ENCODE measurements at regions of chr5 and their contacts with region 1.

Region 1: GRCh38 chr5:134004592-134005375 is at the start of gene VDAC1:
- DNase-seq: peak; percentile 85
- H3K4me3 Mint-ChIP-seq: peak within 1 kb of the TSS; percentile 90
- H3K27ac Mint-ChIP-seq: peak within 1 kb of the TSS; percentile 97
- H3K4me1 Mint-ChIP-seq: peaks cover 37% of the 10 kb centered on the region
- H3K27me3 Mint-ChIP-seq: no peaks in the 10 kb centered on the region
- total RNA-seq, gene VDAC1: 407 to 416 TPM

Region 2: DNA sequence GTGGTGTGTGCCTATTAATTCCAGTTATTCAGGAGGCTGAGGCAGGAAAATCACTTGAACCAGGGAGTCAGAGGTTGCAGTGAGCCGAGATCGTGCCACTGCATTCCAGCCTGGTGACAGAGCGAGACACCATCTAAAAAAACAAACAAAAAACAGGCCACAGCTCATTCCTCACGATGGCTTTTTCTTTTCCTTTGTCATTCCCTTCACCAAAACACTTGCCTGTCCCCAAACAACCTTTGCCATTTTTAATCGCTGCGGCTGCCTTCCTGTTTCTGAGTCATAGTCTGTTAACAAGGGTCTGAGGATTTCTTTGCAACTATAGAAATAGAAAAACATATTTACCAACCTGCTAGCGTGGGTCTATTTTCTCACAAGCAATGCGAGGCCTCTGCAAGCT is 269.5 kb before region 1 on chr5:
- CTCF ChIA-PET with region 1: no interaction called
- POLR2A ChIA-PET with region 1: no interaction called
- intact Hi-C with region 1: no loop called
- DNase-seq: no peak
- H3K4me3 Mint-ChIP-seq: no peak overlapping the region
- H3K27ac Mint-ChIP-seq: no peak overlapping the region
- H3K4me1 Mint-ChIP-seq: no peaks in the 10 kb centered on the region
- H3K27me3 Mint-ChIP-seq: peaks cover 2% of the 10 kb centered on the region

Region 3: GRCh38 chr5:133825631-133826289 is 179.0 kb before region 1 on chr5:
- CTCF ChIA-PET with region 1: no interaction called
- POLR2A ChIA-PET with region 1: no interaction called
- intact Hi-C with region 1: no loop called
- DNase-seq: peak; percentile 25
- H3K4me3 Mint-ChIP-seq: no peak overlapping the region
- H3K27ac Mint-ChIP-seq: no peak overlapping the region
- H3K4me1 Mint-ChIP-seq: peaks cover 20% of the 10 kb centered on the region
- H3K27me3 Mint-ChIP-seq: peaks cover 5% of the 10 kb centered on the region

Region 4: DNA sequence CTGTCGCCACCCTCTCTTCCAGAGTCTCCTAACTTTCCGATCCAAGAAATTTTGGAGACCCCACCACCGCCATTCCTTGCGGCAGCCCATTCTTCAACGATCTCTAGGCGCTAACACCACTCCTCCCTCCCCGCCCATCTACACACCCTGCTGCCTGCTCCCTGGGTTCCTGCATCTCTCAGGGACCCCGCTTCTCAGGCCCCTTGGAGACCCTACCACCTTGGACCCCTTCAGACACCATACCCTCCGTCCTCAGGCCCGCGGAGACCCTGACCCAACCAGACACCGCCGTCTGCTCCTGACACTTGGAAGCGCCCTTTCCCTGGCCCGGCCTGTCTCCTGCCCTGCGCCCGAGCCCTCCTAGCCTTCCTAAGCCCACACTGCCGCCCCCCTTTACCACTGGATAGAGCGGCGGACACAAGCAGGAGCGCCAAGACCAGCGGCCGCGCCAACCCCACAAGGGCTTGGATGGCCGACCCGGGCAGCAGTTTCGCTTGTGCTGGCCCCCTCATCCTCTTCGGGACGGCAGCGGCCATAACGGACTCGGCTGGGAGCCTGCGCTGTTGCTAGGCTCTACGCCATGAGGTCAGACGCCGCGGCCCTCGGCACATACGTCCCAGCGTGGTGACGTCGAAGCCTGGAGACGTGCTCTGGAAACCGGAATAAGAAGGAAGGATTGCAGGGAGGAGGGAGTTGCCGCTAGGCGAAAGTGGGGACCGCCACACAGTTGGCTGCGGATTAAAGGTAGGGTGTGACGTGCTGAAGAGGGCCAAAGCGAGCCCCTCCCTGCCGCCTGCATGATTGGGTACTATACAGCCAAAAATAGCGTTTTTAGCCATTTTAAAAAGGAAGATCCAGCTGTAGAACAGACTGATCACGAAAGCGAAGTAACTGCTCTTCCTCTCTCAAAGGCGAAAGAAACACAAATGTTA is 36.5 kb before region 1 on chr5 and contains the start of gene C5orf15:
- CTCF ChIA-PET with region 1: interaction called, 5 read pairs
- POLR2A ChIA-PET with region 1: interaction called, 3 read pairs
- intact Hi-C with region 1: loop called (anchors 1 kb)
- DNase-seq: peak; percentile 97
- H3K4me3 Mint-ChIP-seq: peak within 1 kb of the TSS; percentile 91
- H3K27ac Mint-ChIP-seq: peak within 1 kb of the TSS; percentile 90
- H3K4me1 Mint-ChIP-seq: peaks cover 51% of the 10 kb centered on the region
- H3K27me3 Mint-ChIP-seq: no peaks in the 10 kb centered on the region
- total RNA-seq, gene C5orf15: 23.7 to 26.7 TPM

Region 5: DNA sequence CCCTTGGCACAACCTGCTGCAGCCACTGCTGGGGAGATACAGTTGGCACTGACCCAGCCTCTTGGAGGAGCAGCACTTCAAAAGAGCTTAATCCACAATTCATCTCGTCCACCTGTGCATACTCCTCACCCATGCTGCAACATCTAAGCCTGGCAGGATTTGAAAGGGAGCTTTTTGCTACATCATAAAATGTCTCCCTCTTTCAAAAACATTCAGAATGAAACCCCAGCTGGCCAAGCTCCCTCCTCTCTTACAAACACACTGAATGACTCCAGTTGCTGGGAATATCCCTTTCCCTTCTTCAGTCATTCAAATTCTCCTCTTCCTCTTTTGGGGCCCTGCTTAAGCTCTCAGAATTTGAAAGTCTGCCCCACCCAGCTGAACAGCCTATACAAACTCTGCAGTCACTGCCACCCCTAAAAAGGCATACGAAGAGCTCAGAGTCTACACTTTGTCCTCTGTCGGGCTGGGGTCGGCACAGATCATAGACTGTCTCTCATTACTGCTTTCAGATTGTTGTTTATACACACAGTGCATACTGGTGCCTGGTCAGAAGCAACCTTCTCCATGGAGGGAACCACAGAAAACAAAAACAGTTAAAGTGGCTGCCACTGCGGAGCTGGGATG is 27.5 kb before region 1 on chr5:
- CTCF ChIA-PET with region 1: interaction called, 13 read pairs
- POLR2A ChIA-PET with region 1: interaction called, 4 read pairs
- intact Hi-C with region 1: no loop called
- DNase-seq: peak; percentile 44
- H3K4me3 Mint-ChIP-seq: no peak overlapping the region
- H3K27ac Mint-ChIP-seq: peak overlapping the region; percentile 81
- H3K4me1 Mint-ChIP-seq: peaks cover 37% of the 10 kb centered on the region
- H3K27me3 Mint-ChIP-seq: no peaks in the 10 kb centered on the region